Heart right ventricle (tissue), 16 donors: ENCODE measurements at regions of chr9 and their contacts with region 1.

Region 1: DNA sequence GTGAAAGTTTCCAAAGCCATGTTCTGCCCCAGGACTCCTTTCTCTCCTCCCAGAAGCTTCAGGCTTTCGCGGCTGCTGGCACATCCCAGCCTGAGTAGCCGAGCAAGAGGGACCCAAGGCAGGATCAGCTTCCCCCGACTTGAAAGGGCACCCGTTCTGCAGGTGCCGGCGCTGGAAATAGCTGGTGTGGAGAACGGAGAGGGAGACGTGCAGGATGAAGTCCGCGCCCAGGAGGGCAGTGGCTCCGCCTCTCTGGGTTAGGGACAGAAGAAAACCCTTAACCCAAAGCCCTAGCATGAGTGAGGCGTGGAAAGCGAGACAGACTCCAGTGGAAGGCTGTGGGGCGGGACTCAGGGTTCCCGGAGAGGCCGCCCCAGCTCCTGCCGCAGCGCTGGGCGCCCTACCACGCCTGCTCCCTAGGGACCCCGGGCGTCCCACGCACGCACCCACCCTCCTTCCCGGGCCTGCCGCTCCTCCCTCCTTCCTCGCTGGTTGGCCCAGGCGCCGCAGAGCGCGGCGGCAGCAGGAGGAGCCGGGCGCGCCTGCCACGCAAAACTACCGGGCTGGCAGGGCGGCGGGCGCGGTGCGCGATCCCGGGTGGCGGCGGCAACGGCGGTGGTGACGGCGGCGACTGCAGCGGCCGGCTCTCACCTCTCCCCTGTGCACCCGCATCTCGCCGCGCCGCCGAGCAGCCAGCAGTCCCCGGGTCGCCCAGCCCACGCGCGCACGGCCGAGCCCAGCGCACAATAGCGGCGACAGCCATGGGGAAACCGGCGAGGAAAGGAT is at the start of gene SLC1A1:
- DNase-seq: peak; percentile 49 to 67
- ATAC-seq: peak; percentile 77 to 92 (median 88)
- H3K4me3 ChIP-seq: peak within 1 kb of the TSS; percentile 63 to 89 (median 76)
- H3K27ac ChIP-seq: peak within 1 kb of the TSS in 9 of 10 donors; percentile 65 to 82 (median 70)
- H3K4me1 ChIP-seq: peaks cover 3 to 25% (median 12%) of the 10 kb centered on the region in 9 donors
- H3K27me3 ChIP-seq: peaks cover 0 to 41% (median 0%) of the 10 kb centered on the region in 7 donors
- CTCF ChIP-seq: no peak
- total RNA-seq, gene SLC1A1: 1.1 to 3.1 (median 1.7) TPM

Region 2: GRCh38 chr9:3980771-3981170 is 509.3 kb before region 1 on chr9:
- intact Hi-C with region 1: no loop called
- DNase-seq: no peak
- ATAC-seq: peak in 4 of 8 donors; percentile 33 to 65 (median 50)
- H3K4me3 ChIP-seq: no peak overlapping the region
- H3K27ac ChIP-seq: no peak overlapping the region
- H3K4me1 ChIP-seq: peaks cover 0 to 14% (median 3%) of the 10 kb centered on the region in 9 donors
- H3K27me3 ChIP-seq: no peaks in the 10 kb centered on the region
- CTCF ChIP-seq: no peak

Region 3: DNA sequence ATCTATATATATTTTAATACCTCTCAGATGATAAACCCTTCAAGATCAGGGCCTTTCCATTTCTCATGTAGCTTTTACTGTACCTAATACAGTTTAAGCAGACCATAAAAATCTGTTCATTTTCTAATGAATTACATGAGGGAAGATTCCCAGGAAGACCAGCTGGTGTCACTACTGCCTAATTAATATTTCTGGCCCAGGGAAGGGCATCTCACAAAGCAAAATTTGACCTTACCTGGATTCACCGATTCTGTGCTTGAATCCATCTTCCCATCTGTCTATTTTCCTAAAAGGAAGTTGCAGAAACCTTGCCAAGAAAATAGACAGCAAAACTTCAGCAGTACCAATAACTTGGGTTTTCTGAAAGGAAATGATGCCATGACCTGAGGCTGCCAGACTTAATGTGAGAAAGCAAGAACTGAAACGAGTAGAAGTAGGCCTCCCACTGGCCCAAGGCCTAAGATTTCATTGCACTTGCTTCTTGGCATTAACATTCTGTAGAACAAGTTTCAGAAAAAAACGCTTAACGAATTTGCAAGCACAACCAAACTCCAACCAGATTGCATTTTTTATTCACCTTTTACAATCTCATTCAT is 107.3 kb before region 1 on chr9:
- intact Hi-C with region 1: loop called in 1 of 10 experiments (anchors 10 kb)
- DNase-seq: no peak
- ATAC-seq: peak in 3 of 8 donors; percentile 34 to 50 (median 47)
- H3K4me3 ChIP-seq: no peak overlapping the region
- H3K27ac ChIP-seq: no peak overlapping the region
- H3K4me1 ChIP-seq: no peaks in the 10 kb centered on the region
- H3K27me3 ChIP-seq: peaks cover 0 to 3% (median 0%) of the 10 kb centered on the region in 7 donors
- CTCF ChIP-seq: peak; percentile 12 to 75 (median 57)

Region 4: GRCh38 chr9:4435197-4435596 is 54.9 kb before region 1 on chr9:
- intact Hi-C with region 1: loop called in 2 of 10 experiments (anchors 10 kb)
- DNase-seq: no peak
- ATAC-seq: peak in 1 of 8 donors; percentile 37
- H3K4me3 ChIP-seq: no peak overlapping the region
- H3K27ac ChIP-seq: no peak overlapping the region
- H3K4me1 ChIP-seq: peaks cover 0 to 13% (median 4%) of the 10 kb centered on the region in 9 donors
- H3K27me3 ChIP-seq: no peaks in the 10 kb centered on the region
- CTCF ChIP-seq: no peak

Region 5: DNA sequence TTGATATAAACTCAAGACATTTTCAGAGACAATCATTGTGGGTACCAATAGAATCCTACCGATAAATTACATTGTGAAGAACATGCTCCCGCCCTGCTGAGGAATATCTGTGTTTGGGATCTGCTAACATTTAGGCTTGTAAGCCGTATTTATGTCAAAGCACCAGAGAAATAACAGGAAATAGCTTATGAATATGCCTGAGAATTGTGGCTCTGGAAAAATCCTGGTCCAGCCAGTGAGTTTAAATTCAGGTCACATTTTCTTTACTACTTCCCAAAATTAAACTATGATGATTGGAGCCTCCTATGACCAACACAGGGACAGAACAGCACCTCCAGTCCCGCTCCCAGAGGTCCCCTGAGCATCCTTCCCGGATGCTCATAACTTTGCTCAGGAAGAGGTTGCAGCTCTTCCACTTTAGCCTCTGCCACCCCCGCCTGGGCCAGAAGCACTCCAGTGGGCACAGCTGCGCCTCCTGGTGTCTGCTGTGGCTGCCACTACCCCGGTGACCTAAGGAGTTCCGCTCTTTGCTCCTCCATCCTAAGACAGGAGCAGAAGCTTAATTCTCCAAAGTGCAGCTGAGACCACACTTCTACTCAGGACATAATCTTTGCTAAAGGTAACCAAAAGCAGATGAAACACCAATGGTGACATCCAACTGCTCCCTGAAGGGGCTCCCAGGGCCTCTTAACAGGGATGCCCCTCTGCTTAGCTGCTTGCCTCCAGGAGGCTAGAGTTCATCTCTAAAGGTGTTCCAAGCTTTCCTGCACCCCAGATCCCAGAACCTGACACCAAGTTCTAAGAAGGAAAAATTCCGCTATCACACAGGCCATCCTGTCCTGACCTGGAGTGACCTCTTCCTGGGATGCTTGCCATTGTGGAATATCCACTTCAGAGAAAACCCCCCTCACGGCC is 59.0 kb after region 1 on chr9:
- intact Hi-C with region 1: loop called in 3 of 10 experiments (anchors 5 kb)
- DNase-seq: peak; percentile 12 to 36
- ATAC-seq: peak in 6 of 8 donors; percentile 40 to 67 (median 64)
- H3K4me3 ChIP-seq: no peak overlapping the region
- H3K27ac ChIP-seq: peak overlapping the region in 6 of 10 donors; percentile 36 to 63 (median 55)
- H3K4me1 ChIP-seq: peaks cover 0 to 74% (median 33%) of the 10 kb centered on the region in 9 donors
- H3K27me3 ChIP-seq: no peaks in the 10 kb centered on the region
- CTCF ChIP-seq: peak in 7 of 9 donors; percentile 29 to 58 (median 43)

Region 6: GRCh38 chr9:4555251-4555650 is 65.1 kb after region 1 on chr9:
- intact Hi-C with region 1: loop called in 2 of 10 experiments (anchors 5 kb)
- DNase-seq: peak in 1 of 2 donors; percentile 62
- ATAC-seq: peak; percentile 21 to 78 (median 62)
- H3K4me3 ChIP-seq: no peak overlapping the region
- H3K27ac ChIP-seq: peak overlapping the region in 8 of 10 donors; percentile 33 to 82 (median 60)
- H3K4me1 ChIP-seq: peaks cover 2 to 73% (median 32%) of the 10 kb centered on the region in 9 donors
- H3K27me3 ChIP-seq: no peaks in the 10 kb centered on the region
- CTCF ChIP-seq: no peak

Region 7: GRCh38 chr9:4596165-4596922 is 106.2 kb after region 1 on chr9:
- intact Hi-C with region 1: loop called in 2 of 10 experiments (anchors 10 kb)
- DNase-seq: peak in 1 of 2 donors; percentile 10
- ATAC-seq: peak; percentile 23 to 75 (median 68)
- H3K4me3 ChIP-seq: no peak overlapping the region
- H3K27ac ChIP-seq: peak overlapping the region in 7 of 10 donors; percentile 12 to 69 (median 53)
- H3K4me1 ChIP-seq: peaks cover 0 to 25% (median 13%) of the 10 kb centered on the region in 9 donors
- H3K27me3 ChIP-seq: no peaks in the 10 kb centered on the region
- CTCF ChIP-seq: no peak

Region 8: DNA sequence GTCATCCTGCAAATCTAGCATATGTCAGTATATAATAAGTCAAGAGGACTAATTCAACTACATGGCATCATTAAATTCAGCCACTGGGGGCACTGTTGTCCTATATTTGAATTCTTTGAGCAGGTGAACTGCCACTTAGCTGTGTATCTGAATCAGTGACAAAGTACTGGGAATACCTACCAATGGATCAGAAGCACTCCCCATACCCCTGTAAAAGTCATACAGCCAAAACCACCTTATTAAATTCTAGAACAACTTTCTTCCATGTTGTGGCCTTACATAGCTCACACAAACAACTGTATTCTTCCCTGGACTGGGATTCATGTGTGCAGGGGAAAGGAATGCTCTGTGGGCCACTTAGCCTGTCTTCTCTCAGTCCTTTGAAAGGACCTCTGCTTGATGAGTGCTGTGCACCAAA is 114.6 kb after region 1 on chr9:
- intact Hi-C with region 1: loop called in 2 of 10 experiments (anchors 10 kb)
- DNase-seq: peak in 1 of 2 donors; percentile 80
- ATAC-seq: peak in 7 of 8 donors; percentile 58 to 85 (median 74)
- H3K4me3 ChIP-seq: no peak overlapping the region
- H3K27ac ChIP-seq: no peak overlapping the region
- H3K4me1 ChIP-seq: no peaks in the 10 kb centered on the region
- H3K27me3 ChIP-seq: no peaks in the 10 kb centered on the region
- CTCF ChIP-seq: peak; percentile 71 to 80 (median 75)